Activated CD8-positive, alpha-beta T cell treated with anti-CD3 and anti-CD28 coated beads, Interleukin-2, amount 10 ng/mL, durations not matched to agents 7 days and 5 days (primary cell): ENCODE measurements at regions of chr11 and their contacts with region 1.

Region 1: DNA sequence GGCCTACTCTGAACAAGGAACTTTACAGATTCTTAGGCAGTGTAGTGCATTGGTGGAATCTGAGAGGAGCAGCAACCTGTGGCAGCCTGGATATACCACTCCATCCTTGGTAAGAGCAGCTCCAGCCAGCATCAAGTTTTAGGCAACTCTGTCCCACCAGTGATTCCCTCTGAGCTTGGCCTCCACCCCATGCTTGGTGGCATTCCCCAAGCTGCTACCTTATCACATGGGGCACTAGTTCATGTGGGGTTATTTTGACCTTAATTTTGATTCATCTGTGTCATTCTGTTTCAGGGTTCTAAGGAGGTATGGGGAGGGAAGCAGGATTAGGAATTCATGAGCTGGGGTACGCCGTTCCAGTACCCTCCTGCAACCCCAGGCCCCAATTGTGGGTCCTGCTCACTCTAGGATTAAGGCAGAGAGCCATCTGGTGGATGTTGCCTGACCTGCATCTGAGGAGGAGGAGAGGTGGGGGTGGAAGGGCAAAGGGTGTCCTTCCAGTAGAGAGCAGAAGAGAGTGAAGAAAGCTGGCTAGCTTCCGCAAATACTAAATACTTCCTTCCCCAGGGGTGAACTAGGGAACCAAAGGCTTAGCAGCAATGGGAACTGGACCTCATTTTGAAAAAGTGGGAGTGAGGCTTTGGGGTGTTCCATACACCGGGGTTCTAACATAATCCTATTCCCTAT is 10.5 kb downstream of the LRRC51 start:
- DNase-seq: peak; percentile 76
- ATAC-seq: peak; percentile 87
- H3K4me3 Mint-ChIP-seq: no peak overlapping the region
- H3K27ac Mint-ChIP-seq: peak overlapping the region; percentile 43
- H3K4me1 Mint-ChIP-seq: peaks cover 4% of the 10 kb centered on the region
- H3K27me3 Mint-ChIP-seq: no peaks in the 10 kb centered on the region

Region 2: GRCh38 chr11:71962428-71963038 is 128.6 kb before region 1 on chr11:
- CTCF ChIA-PET with region 1: no interaction called
- POLR2A ChIA-PET with region 1: no interaction called
- DNase-seq: no peak
- ATAC-seq: no peak
- H3K4me3 Mint-ChIP-seq: no peak overlapping the region
- H3K27ac Mint-ChIP-seq: no peak overlapping the region
- H3K4me1 Mint-ChIP-seq: peaks cover 7% of the 10 kb centered on the region
- H3K27me3 Mint-ChIP-seq: no peaks in the 10 kb centered on the region

Region 3: GRCh38 chr11:72040726-72041441 is 50.3 kb before region 1 on chr11:
- CTCF ChIA-PET with region 1: interaction called, 27 read pairs
- POLR2A ChIA-PET with region 1: no interaction called
- DNase-seq: peak; percentile 73
- ATAC-seq: peak; percentile 30
- H3K4me3 Mint-ChIP-seq: no peak overlapping the region
- H3K27ac Mint-ChIP-seq: no peak overlapping the region
- H3K4me1 Mint-ChIP-seq: peaks cover 7% of the 10 kb centered on the region
- H3K27me3 Mint-ChIP-seq: no peaks in the 10 kb centered on the region

Region 4: DNA sequence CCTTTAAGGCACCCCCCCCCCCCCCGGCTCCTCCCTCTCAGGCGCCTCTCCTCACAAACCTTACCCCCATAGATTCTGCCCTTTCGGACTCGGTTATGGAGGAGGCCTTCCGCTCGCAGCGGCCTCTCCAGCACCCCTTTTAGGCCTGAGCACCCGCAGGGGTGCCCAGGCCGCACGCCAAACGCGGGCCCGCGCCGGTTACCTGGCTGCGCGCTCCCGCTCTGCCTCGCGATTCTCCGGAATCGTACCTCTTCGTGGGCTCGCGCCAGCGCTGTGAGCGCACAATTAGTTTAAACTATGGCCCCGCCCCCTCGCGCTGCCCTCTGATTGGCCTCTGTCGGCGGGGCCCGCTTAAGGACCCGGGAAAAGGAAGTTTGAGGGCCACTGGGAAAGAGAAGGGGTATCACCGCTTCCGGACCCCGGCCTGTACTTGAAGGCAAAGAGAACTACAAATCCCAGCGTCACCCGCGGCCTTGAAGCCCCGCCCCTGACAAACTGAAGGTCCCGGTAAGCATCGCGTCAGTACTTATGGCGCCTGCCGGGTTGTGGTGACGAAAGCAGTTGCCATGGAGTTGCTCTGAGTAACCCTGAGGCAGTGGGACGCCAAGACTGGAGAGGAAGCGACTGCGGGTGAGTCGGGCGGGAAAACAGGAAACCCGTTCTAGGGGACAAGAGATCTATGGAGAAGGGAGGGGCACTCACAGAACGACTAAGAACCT is 10.7 kb before region 1 on chr11 and contains the starts of genes LRRC51 and NUMA1:
- CTCF ChIA-PET with region 1: interaction called, 22 read pairs
- POLR2A ChIA-PET with region 1: interaction called, 7 read pairs
- DNase-seq: peak; percentile 100
- ATAC-seq: peak; percentile 96
- H3K4me3 Mint-ChIP-seq: peak within 1 kb of the TSS; percentile 97
- H3K27ac Mint-ChIP-seq: peak within 1 kb of the TSS; percentile 94
- H3K4me1 Mint-ChIP-seq: peaks cover 48% of the 10 kb centered on the region
- H3K27me3 Mint-ChIP-seq: no peaks in the 10 kb centered on the region
- total RNA-seq, gene LRRC51: 6.9 to 7.0 TPM
- total RNA-seq, gene NUMA1: 198 to 199 TPM

Region 5: DNA sequence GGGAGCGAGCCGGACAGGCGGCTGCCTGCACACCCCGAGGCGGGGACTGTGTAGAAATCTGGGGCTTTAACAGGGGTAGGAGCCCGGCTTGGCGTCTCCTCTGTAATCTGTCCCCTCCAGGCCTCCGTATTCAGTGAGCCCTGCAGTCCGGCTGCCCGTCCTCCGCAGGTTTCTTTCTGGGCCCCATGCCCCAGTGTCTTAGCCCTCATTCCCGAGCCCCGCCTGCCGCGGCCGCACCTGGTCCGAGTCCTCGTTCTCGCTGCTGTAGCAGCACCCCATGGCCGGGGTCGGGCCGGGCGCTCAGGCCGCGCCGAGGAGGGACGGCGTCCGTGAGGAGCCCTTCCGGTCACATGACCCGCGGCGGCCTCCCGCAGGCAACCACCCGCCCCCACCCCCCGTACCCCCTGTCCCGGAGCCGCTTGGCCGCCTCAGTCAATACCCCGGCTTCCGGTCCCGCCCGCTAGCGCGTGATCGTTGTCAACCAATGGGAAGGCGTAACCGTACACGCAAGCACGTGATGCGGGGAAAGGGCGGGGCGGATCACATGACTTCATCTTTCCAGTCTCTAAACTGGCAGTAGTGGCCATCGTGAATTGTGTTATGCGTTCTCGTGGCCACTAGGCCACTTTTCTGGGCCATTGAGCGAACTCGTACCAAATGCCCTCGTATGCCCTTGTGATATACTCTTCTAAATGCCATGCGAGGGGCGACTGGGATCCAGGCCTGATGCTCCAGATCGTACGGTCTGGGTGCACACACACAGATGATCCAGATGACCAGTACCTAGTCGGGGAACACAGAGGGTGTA is 12.0 kb after region 1 on chr11 and contains the start of gene LAMTOR1:
- CTCF ChIA-PET with region 1: interaction called, 48 read pairs
- POLR2A ChIA-PET with region 1: interaction called, 8 read pairs
- DNase-seq: peak; percentile 99
- ATAC-seq: peak; percentile 95
- H3K4me3 Mint-ChIP-seq: peak within 1 kb of the TSS; percentile 96
- H3K27ac Mint-ChIP-seq: peak within 1 kb of the TSS; percentile 87
- H3K4me1 Mint-ChIP-seq: peaks cover 38% of the 10 kb centered on the region
- H3K27me3 Mint-ChIP-seq: no peaks in the 10 kb centered on the region
- total RNA-seq, gene LAMTOR1: 72.7 to 77.0 TPM

Region 6: GRCh38 chr11:72209101-72209500 is 118.0 kb after region 1 on chr11:
- CTCF ChIA-PET with region 1: no interaction called
- POLR2A ChIA-PET with region 1: no interaction called
- DNase-seq: no peak
- ATAC-seq: no peak
- H3K4me3 Mint-ChIP-seq: no peak overlapping the region
- H3K27ac Mint-ChIP-seq: no peak overlapping the region
- H3K4me1 Mint-ChIP-seq: no peaks in the 10 kb centered on the region
- H3K27me3 Mint-ChIP-seq: peaks cover 32% of the 10 kb centered on the region